Heart left ventricle (tissue), 16 donors: ENCODE measurements at regions of chr2 and their contacts with region 1.

Region 1: DNA sequence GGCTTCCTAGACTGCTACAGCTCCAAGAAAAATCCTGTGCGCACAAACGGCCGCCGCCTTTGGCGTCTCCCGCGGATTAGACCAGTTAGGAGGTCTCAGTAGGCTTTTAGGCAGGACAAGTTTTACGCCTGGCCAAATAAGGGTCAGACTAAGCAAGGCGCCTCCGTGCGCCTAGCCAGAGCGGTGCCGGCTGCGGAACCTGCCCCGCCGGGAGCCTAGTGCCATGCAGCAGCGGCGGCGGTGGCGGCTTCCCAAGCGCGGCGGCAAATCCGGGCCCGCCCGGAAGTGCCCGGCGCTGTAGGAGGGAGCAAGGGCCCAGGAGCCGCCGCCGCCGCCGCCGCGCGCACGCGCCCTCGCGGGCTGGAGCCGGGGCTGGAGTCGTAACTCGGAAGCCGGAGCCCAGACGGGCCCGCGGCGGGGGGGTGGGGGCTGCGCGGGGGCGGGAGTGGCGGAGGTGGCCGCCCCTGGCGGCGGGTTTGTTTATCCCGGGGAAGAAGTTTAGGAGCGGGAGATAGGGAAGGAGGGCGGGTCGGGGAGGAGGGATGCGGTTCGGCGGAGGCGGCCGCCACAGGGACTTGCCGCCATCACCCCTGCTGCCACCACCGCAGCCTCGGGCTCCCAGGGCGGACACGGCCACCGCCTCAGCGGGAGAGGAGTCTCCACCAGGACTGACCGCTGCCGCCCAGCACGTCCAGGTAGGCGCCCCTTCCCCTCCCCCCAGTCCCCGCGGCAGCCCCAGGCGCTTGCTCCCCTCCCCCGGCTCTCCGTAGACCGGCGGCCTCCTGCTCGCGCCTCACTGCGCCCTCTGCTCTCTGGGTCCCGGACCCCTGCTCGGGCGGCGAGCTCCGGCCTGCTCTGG is at the start of gene SPOPL:
- DNase-seq: peak; percentile 93 to 96 (median 95)
- ATAC-seq: peak; percentile 87 to 99 (median 96)
- H3K4me3 ChIP-seq: peak within 1 kb of the TSS; percentile 75 to 97 (median 94)
- H3K27ac ChIP-seq: peak within 1 kb of the TSS; percentile 80 to 96 (median 93)
- H3K4me1 ChIP-seq: peaks cover 0 to 62% (median 39%) of the 10 kb centered on the region in 12 donors
- H3K27me3 ChIP-seq: no peaks in the 10 kb centered on the region
- CTCF ChIP-seq: peak; percentile 12 to 59 (median 36)
- POLR2A ChIP-seq: peak in 1 of 2 donors; percentile 44
- total RNA-seq, gene SPOPL: 11.4 to 20.6 (median 17.7) TPM

Region 2: DNA sequence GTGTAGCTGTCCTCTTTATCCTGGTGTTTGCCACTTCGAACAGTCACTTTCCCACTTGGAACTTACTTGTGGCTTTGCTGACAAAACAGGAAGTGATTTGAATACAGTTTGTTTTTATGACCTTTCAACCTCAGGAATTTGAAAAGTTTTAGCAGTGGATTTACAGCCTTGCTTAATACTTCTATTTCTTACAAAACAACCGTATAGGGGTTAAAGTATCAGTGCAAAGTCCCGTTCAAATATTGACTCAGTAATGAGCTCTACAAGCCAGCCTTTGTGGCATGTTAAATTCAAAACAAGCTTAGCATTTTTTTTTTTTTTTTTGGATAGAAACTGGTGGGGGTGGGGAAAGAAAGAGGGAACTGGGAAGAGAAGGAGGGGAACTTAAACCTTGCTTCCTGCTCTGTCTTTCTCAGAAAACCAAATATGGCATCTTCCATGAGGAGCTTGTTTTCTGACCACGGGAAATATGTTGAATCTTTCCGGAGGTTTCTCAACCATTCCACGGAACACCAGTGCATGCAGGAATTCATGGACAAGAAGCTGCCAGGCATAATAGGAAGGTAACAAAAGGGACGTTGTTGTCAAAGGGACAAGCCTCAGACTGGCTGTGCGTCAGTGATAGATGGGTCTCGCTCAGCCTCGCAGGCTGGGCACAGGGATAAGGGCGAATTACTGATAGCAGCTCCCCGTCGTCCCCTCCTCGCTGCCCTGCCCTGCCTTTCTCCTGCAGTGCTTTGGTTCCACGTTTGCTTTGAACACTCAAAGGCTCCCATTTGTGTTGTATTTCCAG is 537.4 kb before region 1 on chr2 and contains the start of gene HNMT:
- intact Hi-C with region 1: loop called in 2 of 10 experiments (anchors 5 to 10 kb)
- DNase-seq: peak; percentile 14 to 52 (median 42)
- ATAC-seq: peak; percentile 15 to 89 (median 74)
- H3K4me3 ChIP-seq: peak within 1 kb of the TSS; percentile 16 to 69 (median 57)
- H3K27ac ChIP-seq: peak within 1 kb of the TSS; percentile 66 to 94 (median 78)
- H3K4me1 ChIP-seq: peaks cover 0 to 57% (median 9%) of the 10 kb centered on the region in 12 donors
- H3K27me3 ChIP-seq: no peaks in the 10 kb centered on the region
- CTCF ChIP-seq: no peak
- POLR2A ChIP-seq: no peak
- total RNA-seq, gene HNMT: 7.5 to 38.1 (median 10.4) TPM

Region 3: DNA sequence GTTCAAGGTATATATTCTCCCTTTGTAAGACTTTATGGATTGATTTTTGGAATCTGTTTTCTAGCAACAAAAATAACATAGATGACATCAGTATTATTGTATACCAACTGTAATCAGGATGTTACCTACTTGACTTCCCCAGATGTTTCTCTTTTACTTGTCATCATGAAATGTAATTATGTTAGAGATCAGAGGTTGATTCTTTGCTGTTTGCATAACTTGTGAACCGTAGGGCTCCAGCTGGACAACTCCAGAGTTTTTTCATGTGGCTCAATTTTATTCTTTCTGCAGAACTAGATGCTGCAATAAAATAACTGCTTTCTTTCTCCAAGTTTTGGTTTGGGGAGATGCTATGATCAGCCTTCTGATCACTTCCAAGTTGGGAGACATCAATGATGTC is 58.0 kb after region 1 on chr2:
- intact Hi-C with region 1: loop called in 1 of 10 experiments (anchors 10 kb)
- DNase-seq: no peak
- ATAC-seq: no peak
- H3K4me3 ChIP-seq: no peak overlapping the region
- H3K27ac ChIP-seq: no peak overlapping the region
- H3K4me1 ChIP-seq: no peaks in the 10 kb centered on the region
- H3K27me3 ChIP-seq: no peaks in the 10 kb centered on the region
- CTCF ChIP-seq: no peak
- POLR2A ChIP-seq: no peak

Region 4: DNA sequence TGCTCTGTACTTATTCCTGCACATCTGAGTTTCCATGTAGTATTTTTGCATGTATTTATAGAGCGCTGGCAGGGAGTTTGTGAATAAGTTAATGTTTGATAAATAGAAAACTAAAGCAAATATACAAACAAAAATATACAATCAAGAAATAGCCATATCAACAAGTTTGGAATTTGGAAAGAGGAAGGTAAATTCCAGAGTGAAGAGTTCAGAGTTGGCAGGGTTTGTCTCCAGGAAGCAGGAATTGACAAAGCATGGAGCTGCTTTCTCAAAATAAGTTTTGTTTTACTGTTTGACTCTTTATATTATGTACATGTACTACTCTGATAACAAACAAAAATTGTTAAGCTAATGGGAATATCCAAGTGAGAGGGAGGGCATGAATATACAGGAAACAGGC is 80.3 kb after region 1 on chr2:
- intact Hi-C with region 1: no loop called
- DNase-seq: no peak
- ATAC-seq: no peak
- H3K4me3 ChIP-seq: no peak overlapping the region
- H3K27ac ChIP-seq: no peak overlapping the region
- H3K4me1 ChIP-seq: no peaks in the 10 kb centered on the region
- H3K27me3 ChIP-seq: no peaks in the 10 kb centered on the region
- CTCF ChIP-seq: no peak
- POLR2A ChIP-seq: no peak

Region 5: DNA sequence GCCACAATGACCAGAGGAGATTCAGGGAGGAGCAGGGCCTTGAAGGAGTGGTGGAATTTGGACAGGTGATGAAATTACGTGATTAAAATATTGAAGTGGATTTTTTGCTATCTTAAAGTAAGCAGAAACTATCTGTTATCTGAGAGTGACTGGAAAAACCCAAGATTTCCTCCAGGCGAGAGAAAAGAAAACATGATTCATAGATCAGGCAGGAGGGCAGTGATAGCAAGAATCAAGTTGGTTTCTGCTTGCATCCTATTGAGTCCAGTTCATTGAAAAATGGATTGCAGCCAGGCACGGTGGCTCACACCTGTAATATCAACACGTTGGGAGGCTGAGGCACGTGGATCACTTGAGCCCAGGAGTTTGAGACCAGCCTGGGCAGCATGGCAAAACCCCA is 150.7 kb after region 1 on chr2:
- intact Hi-C with region 1: no loop called
- DNase-seq: no peak
- ATAC-seq: no peak
- H3K4me3 ChIP-seq: no peak overlapping the region
- H3K27ac ChIP-seq: no peak overlapping the region
- H3K4me1 ChIP-seq: no peaks in the 10 kb centered on the region
- H3K27me3 ChIP-seq: no peaks in the 10 kb centered on the region
- CTCF ChIP-seq: no peak
- POLR2A ChIP-seq: no peak

Region 6: DNA sequence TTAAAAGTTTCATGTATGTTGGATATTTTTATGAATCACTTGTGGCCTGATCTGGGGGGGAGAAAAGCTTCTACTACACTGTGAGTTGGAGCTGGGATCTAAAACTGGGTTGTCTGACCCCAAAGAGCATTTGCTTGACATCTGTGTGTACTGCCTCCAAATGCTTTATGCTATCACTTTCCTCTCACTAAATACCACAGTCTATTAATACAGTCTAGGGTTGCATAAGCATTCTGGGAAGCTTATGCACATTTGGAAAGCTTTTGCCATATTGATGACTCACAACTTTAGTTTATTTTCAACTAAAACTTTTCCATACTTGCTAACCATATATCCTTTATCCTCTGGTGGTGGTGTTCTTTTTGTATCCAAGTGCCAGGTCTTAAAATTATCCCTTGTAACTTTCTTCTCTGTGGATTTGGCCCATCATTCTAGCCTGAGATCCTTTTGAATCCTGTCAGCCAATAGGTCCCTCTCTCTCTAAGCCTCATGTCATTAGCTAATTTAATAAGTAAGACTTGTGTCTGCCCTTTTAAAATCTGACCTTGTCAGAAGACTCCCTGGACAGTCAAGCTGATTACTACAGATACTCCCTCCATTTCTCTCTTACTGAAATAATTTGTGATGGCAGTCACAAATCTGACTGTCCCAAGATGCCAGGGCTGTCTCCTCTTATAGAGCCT is 205.9 kb after region 1 on chr2:
- intact Hi-C with region 1: loop called in 1 of 10 experiments (anchors 10 kb)
- DNase-seq: no peak
- ATAC-seq: peak in 3 of 4 donors; percentile 78 to 91 (median 90)
- H3K4me3 ChIP-seq: no peak overlapping the region
- H3K27ac ChIP-seq: peak overlapping the region in 10 of 12 donors; percentile 9 to 55 (median 20)
- H3K4me1 ChIP-seq: peaks cover 0 to 27% (median 17%) of the 10 kb centered on the region in 12 donors
- H3K27me3 ChIP-seq: no peaks in the 10 kb centered on the region
- CTCF ChIP-seq: no peak
- POLR2A ChIP-seq: no peak